ENCODE measurements at regions of chr11 and their contacts with region 1.

Region 1: GRCh38 chr11:10725114-10725906 is 25.7 kb upstream of the CTR9 start:
- H3K4me3 Mint-ChIP-seq: no peak overlapping the region
- H3K27ac Mint-ChIP-seq: peak overlapping the region; percentile 39
- H3K4me1 Mint-ChIP-seq: peaks cover 52% of the 10 kb centered on the region
- H3K27me3 Mint-ChIP-seq: peaks cover 88% of the 10 kb centered on the region

Region 2: DNA sequence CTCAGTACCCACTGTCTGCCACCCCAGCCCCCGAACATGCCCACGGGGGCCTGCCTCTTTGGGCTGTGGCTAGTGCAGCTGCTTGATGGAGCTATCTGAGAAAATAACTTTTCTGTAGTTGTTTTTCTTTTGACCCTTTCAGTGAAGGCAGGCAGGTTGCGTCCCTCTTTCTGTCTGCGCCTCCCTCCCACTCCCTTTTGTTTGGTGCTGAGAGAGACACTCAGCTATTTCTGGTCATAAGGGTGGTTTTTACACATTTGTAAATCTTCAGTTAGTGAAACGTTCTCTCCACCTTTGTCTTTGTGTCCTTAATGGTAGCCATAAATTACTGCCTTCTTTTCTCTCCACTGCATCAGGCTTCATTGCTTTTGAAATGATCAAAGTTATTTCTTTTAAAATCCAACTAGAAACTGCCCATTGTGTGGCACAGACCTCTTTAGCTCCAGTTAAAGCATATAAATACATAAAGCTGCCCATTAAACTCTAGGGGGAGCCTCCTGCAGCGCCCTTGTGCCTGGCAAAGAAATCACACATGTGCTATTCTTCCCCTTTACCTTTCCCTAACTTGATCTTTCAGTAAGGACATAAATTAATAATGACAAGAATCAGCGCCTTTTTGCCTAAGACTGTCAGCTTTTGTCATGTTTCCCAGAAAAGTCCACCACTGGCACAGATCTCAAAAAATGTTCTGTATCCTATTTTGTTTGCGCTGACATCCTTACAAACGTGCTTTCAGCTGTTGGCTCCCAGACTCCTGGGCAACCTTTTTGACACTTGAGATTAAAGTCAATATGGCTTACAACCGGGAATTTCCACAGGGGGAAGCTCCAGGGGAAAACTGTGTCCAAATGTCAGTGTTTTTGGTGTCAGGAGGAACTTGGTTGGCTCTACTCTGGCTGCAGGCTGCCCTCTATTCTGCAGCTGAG is 1632.2 kb before region 1 on chr11:
- intact Hi-C with region 1: no loop called
- H3K4me3 Mint-ChIP-seq: no peak overlapping the region
- H3K27ac Mint-ChIP-seq: no peak overlapping the region
- H3K4me1 Mint-ChIP-seq: peaks cover 5% of the 10 kb centered on the region
- H3K27me3 Mint-ChIP-seq: peaks cover 65% of the 10 kb centered on the region

Region 3: GRCh38 chr11:10669258-10670033 is 55.9 kb before region 1 on chr11:
- intact Hi-C with region 1: loop called (anchors 10 kb)
- H3K4me3 Mint-ChIP-seq: no peak overlapping the region
- H3K27ac Mint-ChIP-seq: no peak overlapping the region
- H3K4me1 Mint-ChIP-seq: peaks cover 16% of the 10 kb centered on the region
- H3K27me3 Mint-ChIP-seq: peaks cover 30% of the 10 kb centered on the region

Region 4: DNA sequence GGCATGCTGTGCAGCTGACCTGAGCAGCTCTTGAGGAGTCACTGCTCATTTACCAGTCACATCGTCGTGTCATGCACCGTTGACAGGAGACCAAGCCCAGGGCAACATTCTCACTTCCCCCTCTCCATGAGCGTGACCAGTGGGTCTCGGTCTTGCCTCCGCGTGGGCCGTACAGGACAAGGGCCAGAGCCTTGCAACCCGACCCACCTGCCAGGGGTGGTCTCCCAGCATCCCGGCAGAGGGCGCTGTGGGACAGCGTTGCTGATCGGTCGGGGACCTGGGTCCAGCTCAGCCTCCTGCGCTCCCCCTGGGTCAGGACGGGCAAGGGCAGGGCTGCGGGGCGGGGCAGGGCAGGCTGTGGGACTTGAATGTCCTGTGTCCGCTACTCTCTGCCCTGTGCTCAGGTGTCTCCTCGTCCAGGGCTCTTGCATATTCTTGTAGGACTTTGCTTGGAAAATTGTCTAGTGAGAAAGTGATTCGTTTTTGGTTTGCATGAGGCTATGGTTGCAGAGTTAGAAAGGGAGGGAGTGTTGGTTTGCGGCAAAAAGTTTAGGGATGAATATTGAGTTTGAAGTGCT is 67.2 kb after region 1 on chr11:
- intact Hi-C with region 1: no loop called
- H3K4me3 Mint-ChIP-seq: no peak overlapping the region
- H3K27ac Mint-ChIP-seq: no peak overlapping the region
- H3K4me1 Mint-ChIP-seq: peaks cover 21% of the 10 kb centered on the region
- H3K27me3 Mint-ChIP-seq: peaks cover 17% of the 10 kb centered on the region

Region 5: DNA sequence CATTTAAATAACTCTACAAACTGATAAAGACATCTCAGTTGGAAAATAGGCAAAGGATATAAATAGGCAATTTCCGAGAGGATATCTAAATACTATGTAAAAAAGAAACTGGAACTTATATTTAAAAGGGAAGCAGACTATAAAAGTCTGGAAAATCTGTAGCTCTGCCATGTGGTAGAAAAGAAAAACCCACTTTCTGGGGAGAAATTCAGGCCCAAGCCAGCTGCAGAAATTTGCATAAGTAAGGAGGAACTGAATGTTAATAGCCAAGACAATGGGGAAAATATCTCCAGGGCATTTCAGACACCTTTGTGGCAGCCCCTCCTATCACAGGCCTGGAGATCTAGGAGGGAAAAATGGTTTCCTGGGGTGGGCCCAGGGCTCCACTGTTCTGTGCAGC is 230.3 kb after region 1 on chr11:
- intact Hi-C with region 1: no loop called
- H3K4me3 Mint-ChIP-seq: no peak overlapping the region
- H3K27ac Mint-ChIP-seq: peak overlapping the region; percentile 67
- H3K4me1 Mint-ChIP-seq: peaks cover 58% of the 10 kb centered on the region
- H3K27me3 Mint-ChIP-seq: peaks cover 6% of the 10 kb centered on the region